GM12878 (cell line): ENCODE measurements at regions of chr11 and their contacts with region 1.

Region 1: DNA sequence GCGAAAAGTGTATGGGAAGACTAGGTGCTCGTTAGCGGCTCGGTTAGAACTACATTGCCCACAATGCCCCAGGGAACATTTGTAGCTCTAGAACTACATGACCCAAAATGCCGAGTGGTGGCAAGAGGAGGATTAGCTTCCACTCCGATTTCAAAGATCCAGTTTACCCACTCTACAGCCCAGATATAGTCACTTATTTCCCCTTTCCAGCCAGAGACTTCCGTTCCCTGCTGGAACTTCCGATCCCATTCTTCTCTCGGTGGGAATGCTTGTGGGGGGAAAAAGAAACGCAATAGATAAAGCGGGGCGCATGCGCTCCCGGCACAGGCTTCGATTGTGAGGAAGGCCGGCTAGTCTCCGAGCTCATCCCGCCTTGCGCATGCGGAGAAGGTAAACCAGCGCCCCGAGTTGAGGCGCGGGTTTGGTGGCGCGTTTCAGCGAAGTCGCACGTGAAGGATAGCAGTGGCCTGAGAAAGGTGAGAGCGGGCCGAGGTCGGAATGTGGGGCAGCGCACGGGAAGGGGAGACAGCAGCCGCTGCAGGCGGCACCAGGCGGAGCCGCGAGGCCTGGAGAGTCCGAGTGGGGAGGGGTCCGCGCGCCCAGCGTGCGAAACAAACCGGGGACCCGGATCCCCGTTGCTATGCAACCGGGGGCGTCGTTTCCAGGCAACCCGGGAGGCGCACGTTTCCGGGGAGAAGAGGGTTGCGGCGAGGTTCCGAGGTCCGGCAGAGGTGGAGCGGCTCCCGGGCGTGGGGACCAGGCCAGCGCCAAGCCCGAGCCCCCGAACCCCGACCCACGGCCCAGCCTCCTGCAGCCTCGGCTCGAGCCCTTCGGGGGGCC is at the start of gene TMEM109:
- DNase-seq: peak; percentile 86
- ATAC-seq: peak; percentile 67
- H3K4me3 ChIP-seq: peak within 1 kb of the TSS; percentile 82
- H3K27ac ChIP-seq: peak within 1 kb of the TSS; percentile 94
- H3K4me1 ChIP-seq: peaks cover 59% of the 10 kb centered on the region
- H3K27me3 ChIP-seq: no peaks in the 10 kb centered on the region
- CTCF ChIP-seq: no peak
- EP300 ChIP-seq: no peak
- POLR2A ChIP-seq: peak; percentile 70
- RAD21 ChIP-seq: no peak
- polyA plus RNA-seq, gene TMEM109: 21.9 to 52.9 TPM

Region 2: GRCh38 chr11:60797846-60798630 is 116.0 kb before region 1 on chr11:
- CTCF ChIA-PET with region 1: no interaction called
- POLR2A ChIA-PET with region 1: no interaction called
- RAD21 ChIA-PET with region 1: no interaction called
- SMC1A ChIA-PET with region 1: no interaction called
- in situ Hi-C with region 1: no loop called
- intact Hi-C with region 1: no loop called
- DNase-seq: no peak
- ATAC-seq: no peak
- H3K4me3 ChIP-seq: no peak overlapping the region
- H3K27ac ChIP-seq: no peak overlapping the region
- H3K4me1 ChIP-seq: no peaks in the 10 kb centered on the region
- H3K27me3 ChIP-seq: no peaks in the 10 kb centered on the region; a peak in 1 of 4 replicates
- CTCF ChIP-seq: no peak
- EP300 ChIP-seq: no peak
- POLR2A ChIP-seq: no peak
- RAD21 ChIP-seq: no peak

Region 3: GRCh38 chr11:60831143-60831500 is 82.9 kb before region 1 on chr11:
- CTCF ChIA-PET with region 1: interaction called, 15 read pairs
- POLR2A ChIA-PET with region 1: no interaction called
- RAD21 ChIA-PET with region 1: interaction called, 8 read pairs
- SMC1A ChIA-PET with region 1: interaction called, 9 read pairs
- in situ Hi-C with region 1: no loop called
- intact Hi-C with region 1: no loop called
- DNase-seq: peak; percentile 26
- ATAC-seq: peak; percentile 98
- H3K4me3 ChIP-seq: no peak overlapping the region
- H3K27ac ChIP-seq: no peak overlapping the region
- H3K4me1 ChIP-seq: no peaks in the 10 kb centered on the region; the same call in 1 of the 2 replicates
- H3K27me3 ChIP-seq: no peaks in the 10 kb centered on the region; a peak in 2 of 4 replicates
- CTCF ChIP-seq: peak; percentile 94 to 95 (median 95)
- EP300 ChIP-seq: no peak
- POLR2A ChIP-seq: no peak
- RAD21 ChIP-seq: peak; percentile 96

Region 4: DNA sequence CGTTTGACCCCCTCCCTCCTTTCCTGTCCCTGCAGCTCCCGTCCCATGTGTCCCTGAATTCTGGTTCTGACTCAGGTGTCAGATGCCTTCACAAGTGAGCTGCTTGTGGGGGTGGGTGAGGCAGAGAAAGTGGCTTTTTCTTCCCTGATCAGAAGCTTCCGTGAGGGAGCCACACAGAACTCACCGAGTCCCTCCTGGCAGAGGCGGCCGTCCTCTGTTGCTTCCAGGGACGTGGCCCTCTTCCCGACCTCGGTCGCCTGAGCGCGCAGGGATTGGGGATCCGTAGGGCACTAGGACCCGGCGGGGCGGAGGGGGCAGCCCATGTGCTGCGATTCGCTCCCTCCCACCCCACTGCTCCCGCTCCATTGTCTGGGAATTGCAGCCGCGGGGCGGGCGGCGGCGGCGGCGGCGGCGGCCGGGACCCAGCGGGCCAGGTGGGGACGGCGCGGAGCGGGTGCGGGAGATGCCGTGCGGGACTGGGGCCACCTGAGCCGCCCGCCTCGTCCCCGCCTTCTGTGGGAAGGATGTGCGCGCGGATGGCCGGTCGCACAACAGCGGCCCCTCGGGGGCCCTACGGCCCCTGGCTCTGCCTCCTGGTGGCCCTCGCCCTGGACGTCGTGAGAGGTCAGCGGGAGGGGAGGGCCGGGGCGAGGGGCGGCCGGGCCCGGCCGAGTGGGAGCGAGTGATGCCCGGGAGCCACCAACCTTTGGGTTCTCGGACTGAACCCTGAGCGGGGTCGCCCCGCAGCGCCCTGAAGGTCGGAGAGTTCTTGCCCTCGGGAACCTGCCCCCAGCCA is 10.3 kb after region 1 on chr11 and contains the start of gene TMEM132A:
- CTCF ChIA-PET with region 1: interaction called, 11 read pairs
- POLR2A ChIA-PET with region 1: interaction called, 9 read pairs
- RAD21 ChIA-PET with region 1: interaction called, 8 read pairs
- SMC1A ChIA-PET with region 1: interaction called, 10 read pairs
- in situ Hi-C with region 1: no loop called
- intact Hi-C with region 1: no loop called
- DNase-seq: no peak
- ATAC-seq: peak; percentile 66
- H3K4me3 ChIP-seq: peak within 1 kb of the TSS; percentile 59
- H3K27ac ChIP-seq: no peak within 1 kb of the TSS
- H3K4me1 ChIP-seq: peaks cover 24% of the 10 kb centered on the region
- H3K27me3 ChIP-seq: no peaks in the 10 kb centered on the region
- CTCF ChIP-seq: 0 out of 6 replicates have a peak, but pooled peaks of 1 of the 3 experiments have one; percentile 1
- EP300 ChIP-seq: no peak
- POLR2A ChIP-seq: 0 out of 2 replicates have a peak, but pooled peaks have one; percentile 31
- RAD21 ChIP-seq: no peak
- polyA plus RNA-seq, gene TMEM132A: 0.16 to 0.79 TPM

Region 5: GRCh38 chr11:60944490-60945294 is 30.7 kb after region 1 on chr11:
- CTCF ChIA-PET with region 1: interaction called, 20 read pairs
- POLR2A ChIA-PET with region 1: interaction called, 11 read pairs
- RAD21 ChIA-PET with region 1: interaction called, 43 read pairs
- SMC1A ChIA-PET with region 1: interaction called, 76 read pairs
- in situ Hi-C with region 1: no loop called
- intact Hi-C with region 1: no loop called
- DNase-seq: no peak
- ATAC-seq: peak; percentile 76
- H3K4me3 ChIP-seq: 0 out of 2 replicates have a peak overlapping the region, but pooled peaks have one; percentile 8
- H3K27ac ChIP-seq: peak overlapping the region; percentile 31; the same call in 1 of the 2 replicates
- H3K4me1 ChIP-seq: peaks cover 20% of the 10 kb centered on the region
- H3K27me3 ChIP-seq: no peaks in the 10 kb centered on the region
- CTCF ChIP-seq: peak in 2 of 3 experiments; percentile 39 to 48; a peak in 4 of 6 replicates
- EP300 ChIP-seq: no peak
- POLR2A ChIP-seq: peak; percentile 26; the same call in 1 of the 2 replicates
- RAD21 ChIP-seq: peak; percentile 45

Region 6: GRCh38 chr11:61041755-61042518 is 127.9 kb after region 1 on chr11:
- CTCF ChIA-PET with region 1: interaction called, 5 read pairs
- POLR2A ChIA-PET with region 1: interaction called, 3 read pairs
- RAD21 ChIA-PET with region 1: interaction called, 11 read pairs
- SMC1A ChIA-PET with region 1: interaction called, 9 read pairs
- in situ Hi-C with region 1: no loop called
- intact Hi-C with region 1: no loop called
- DNase-seq: no peak
- ATAC-seq: peak; percentile 89
- H3K4me3 ChIP-seq: peak overlapping the region; percentile 51; the same call in 1 of the 2 replicates
- H3K27ac ChIP-seq: peak overlapping the region; percentile 77
- H3K4me1 ChIP-seq: peaks cover 15% of the 10 kb centered on the region
- H3K27me3 ChIP-seq: no peaks in the 10 kb centered on the region
- CTCF ChIP-seq: no peak
- EP300 ChIP-seq: peak in 1 of 2 experiments; percentile 26; a peak in 2 of 4 replicates
- POLR2A ChIP-seq: peak; percentile 79
- RAD21 ChIP-seq: no peak; the same call in 1 of the 2 replicates

Region 7: DNA sequence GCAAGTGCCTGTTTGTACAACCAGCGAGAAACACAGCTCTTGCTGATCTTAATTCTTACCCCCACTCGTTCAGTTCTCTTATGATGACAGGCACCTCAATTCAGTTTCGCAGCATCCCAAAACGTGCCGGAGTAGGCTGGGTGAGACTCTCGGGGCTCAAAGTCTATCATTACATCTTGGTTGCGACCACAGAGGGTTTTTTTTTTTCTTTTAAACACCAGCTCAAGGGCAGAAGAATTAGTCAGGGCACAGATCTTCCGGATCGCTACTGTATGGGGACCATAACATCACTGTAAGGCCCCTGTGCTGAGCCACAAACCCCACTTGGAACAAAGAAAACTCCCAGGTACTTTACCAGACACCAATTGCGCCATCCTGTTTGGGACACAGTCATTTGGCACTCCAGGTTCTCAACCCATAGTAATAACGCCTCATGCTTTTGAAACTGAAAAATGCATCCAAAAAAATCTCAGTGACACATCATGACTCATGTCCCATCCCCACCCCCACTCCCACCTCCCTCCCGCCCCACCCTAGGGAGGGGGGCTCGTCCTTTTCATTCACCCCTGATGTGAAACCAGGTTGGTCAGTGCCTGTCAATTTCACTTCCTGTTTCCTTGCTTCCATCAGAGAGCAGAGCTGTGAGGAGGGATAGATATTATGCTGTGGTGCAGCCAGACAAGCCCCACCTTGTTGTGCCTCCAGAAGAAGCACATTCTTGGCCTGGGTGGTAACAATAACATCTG is 147.2 kb after region 1 on chr11:
- CTCF ChIA-PET with region 1: interaction called, 9 read pairs
- POLR2A ChIA-PET with region 1: interaction called, 5 read pairs
- RAD21 ChIA-PET with region 1: interaction called, 14 read pairs
- SMC1A ChIA-PET with region 1: interaction called, 3 read pairs
- in situ Hi-C with region 1: no loop called
- intact Hi-C with region 1: loop called (anchors 2 kb)
- DNase-seq: peak; percentile 97
- ATAC-seq: peak; percentile 90
- H3K4me3 ChIP-seq: peak overlapping the region; percentile 48; the same call in 1 of the 2 replicates
- H3K27ac ChIP-seq: peak overlapping the region; percentile 84
- H3K4me1 ChIP-seq: peaks cover 30% of the 10 kb centered on the region
- H3K27me3 ChIP-seq: no peaks in the 10 kb centered on the region
- CTCF ChIP-seq: no peak
- EP300 ChIP-seq: peak; percentile 91 to 99
- POLR2A ChIP-seq: peak; percentile 43; the same call in 1 of the 2 replicates
- RAD21 ChIP-seq: peak; percentile 27

Region 8: DNA sequence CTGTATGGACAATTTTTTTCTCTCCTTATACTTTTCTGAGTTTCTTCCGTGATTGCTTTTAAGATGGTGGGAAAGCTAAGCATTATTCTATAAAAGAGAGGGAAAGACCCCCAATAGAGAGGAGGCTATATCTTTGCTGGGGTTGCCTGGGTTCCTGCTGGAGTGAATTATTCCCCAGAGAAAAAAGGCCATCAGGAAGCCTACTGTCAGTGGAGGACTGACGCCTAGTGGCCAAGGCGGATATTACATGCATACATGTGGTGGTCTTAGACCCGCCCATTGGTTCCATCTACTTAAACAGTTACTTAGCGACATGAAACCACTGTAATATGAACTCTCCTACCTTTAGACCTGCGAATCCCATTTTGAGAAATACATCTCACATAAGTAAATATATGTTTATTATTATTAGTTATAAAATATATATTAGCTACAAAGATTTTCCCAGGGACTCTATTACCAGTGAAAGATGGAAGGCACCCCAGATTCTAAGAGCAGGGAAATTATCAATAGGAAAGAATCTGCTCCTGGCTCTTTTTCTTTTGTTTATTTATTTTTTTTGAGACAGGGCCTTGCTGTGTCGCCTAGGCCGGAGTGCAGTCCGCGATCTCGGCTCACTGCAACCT is 273.6 kb after region 1 on chr11:
- CTCF ChIA-PET with region 1: interaction called, 14 read pairs
- POLR2A ChIA-PET with region 1: no interaction called
- RAD21 ChIA-PET with region 1: interaction called, 9 read pairs
- SMC1A ChIA-PET with region 1: interaction called, 14 read pairs
- in situ Hi-C with region 1: no loop called
- intact Hi-C with region 1: no loop called
- DNase-seq: peak; percentile 60
- ATAC-seq: peak; percentile 97
- H3K4me3 ChIP-seq: no peak overlapping the region
- H3K27ac ChIP-seq: no peak overlapping the region
- H3K4me1 ChIP-seq: no peaks in the 10 kb centered on the region
- H3K27me3 ChIP-seq: no peaks in the 10 kb centered on the region
- CTCF ChIP-seq: peak; percentile 90 to 98 (median 96); a peak in 5 of 6 replicates
- EP300 ChIP-seq: no peak
- POLR2A ChIP-seq: no peak
- RAD21 ChIP-seq: peak; percentile 98